MCF 10A (cell line): ENCODE measurements at regions of chr6 and their contacts with region 1.

Region 1: DNA sequence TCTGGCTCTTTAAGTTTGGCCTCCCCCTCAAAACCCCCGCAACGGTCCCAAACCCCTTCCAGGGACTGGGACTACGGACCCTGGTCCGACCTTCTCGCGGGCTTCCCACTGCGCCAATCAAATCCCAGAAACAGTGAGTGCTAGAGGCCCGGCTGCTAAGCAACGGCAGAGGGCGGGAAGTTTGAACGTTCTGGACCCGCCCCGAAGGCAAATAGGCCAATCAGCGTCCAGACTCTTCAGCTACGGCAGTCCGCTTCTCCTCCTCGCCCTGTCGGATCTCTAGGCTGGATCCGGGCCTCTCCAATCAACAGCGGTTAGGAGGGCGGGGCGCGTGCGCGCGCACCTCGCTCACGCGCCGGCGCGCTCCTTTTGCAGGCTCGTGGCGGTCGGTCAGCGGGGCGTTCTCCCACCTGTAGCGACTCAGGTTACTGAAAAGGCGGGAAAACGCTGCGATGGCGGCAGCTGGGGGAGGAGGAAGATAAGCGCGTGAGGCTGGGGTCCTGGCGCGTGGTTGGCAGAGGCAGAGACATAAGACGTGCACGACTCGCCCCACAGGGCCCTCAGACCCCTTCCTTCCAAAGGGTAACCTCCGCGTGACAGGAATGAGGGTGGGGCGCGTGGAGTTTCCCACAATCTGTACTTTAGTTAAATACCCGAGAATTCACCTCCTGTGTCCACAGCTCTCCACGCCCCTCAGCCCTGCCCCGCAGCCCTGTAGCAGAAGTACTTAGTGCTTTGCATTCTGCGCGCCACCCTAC is at the start of gene MSH5:
- DNase-seq: peak; percentile 99
- H3K4me3 Mint-ChIP-seq: peak within 1 kb of the TSS; percentile 88
- H3K27ac Mint-ChIP-seq: peak within 1 kb of the TSS; percentile 81
- H3K4me1 Mint-ChIP-seq: peaks cover 40% of the 10 kb centered on the region
- H3K27me3 Mint-ChIP-seq: no peaks in the 10 kb centered on the region
- CTCF ChIP-seq: no peak
- total RNA-seq, gene MSH5: 36.6 and 43.1 TPM in 2 replicates

Region 2: GRCh38 chr6:31702819-31703522 is 36.8 kb before region 1 on chr6 and contains the start of gene ABHD16A:
- CTCF ChIA-PET with region 1: no interaction called
- POLR2A ChIA-PET with region 1: interaction called, 29 read pairs
- intact Hi-C with region 1: loop called (anchors 2 kb)
- DNase-seq: peak; percentile 98
- H3K4me3 Mint-ChIP-seq: peak within 1 kb of the TSS; percentile 95
- H3K27ac Mint-ChIP-seq: peak within 1 kb of the TSS; percentile 89
- H3K4me1 Mint-ChIP-seq: peaks cover 5% of the 10 kb centered on the region
- H3K27me3 Mint-ChIP-seq: no peaks in the 10 kb centered on the region
- CTCF ChIP-seq: no peak
- total RNA-seq, gene ABHD16A: 32.1 and 42.7 TPM in 2 replicates

Region 3: GRCh38 chr6:31752739-31753319 is 13.0 kb after region 1 on chr6:
- CTCF ChIA-PET with region 1: interaction called, 4 read pairs
- POLR2A ChIA-PET with region 1: interaction called, 13 read pairs
- intact Hi-C with region 1: no loop called
- DNase-seq: peak; percentile 60
- H3K4me3 Mint-ChIP-seq: no peak overlapping the region
- H3K27ac Mint-ChIP-seq: no peak overlapping the region
- H3K4me1 Mint-ChIP-seq: peaks cover 10% of the 10 kb centered on the region
- H3K27me3 Mint-ChIP-seq: no peaks in the 10 kb centered on the region
- CTCF ChIP-seq: no peak

Region 4: DNA sequence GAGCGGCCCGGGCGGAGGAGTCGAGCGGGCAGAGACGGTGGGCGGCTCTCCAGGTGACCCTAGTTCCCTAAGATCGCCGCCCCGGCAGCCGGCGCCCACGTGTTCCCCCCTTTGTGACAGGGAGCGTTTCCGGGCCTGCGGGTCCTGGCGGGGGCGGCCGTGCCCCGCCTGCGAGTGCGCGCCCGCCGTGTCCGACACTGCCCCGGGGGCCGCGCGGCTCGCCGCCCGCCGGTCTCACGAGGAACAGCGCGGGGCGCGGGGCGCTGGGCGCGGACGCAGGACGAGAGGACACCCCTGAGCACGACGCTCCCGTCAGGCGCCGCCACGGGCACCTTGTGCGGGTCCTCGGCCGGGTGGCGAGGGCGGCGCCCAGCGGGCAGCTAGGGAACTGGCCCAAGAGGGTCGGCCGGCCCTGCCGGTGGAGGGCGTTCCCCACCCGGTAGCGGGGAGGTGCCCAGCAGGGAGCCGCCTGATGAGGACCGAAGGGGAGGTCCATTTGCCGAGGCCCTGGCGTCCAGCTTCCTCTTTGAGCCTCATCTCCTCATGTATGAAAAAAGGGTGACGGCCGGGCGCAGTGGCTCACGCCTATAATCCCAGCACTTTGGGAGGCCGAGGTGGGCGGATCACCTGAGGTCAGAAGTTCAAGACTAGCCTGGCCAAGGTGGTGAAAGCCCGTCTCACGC is 55.9 kb after region 1 on chr6 and contains the start of gene VARS1:
- CTCF ChIA-PET with region 1: interaction called, 5 read pairs
- POLR2A ChIA-PET with region 1: interaction called, 30 read pairs
- intact Hi-C with region 1: no loop called
- DNase-seq: peak; percentile 93
- H3K4me3 Mint-ChIP-seq: peak within 1 kb of the TSS; percentile 99
- H3K27ac Mint-ChIP-seq: peak within 1 kb of the TSS; percentile 98
- H3K4me1 Mint-ChIP-seq: peaks cover 27% of the 10 kb centered on the region
- H3K27me3 Mint-ChIP-seq: no peaks in the 10 kb centered on the region
- CTCF ChIP-seq: peak; percentile 69
- total RNA-seq, gene VARS1: 133 and 200 TPM in 2 replicates

Region 5: DNA sequence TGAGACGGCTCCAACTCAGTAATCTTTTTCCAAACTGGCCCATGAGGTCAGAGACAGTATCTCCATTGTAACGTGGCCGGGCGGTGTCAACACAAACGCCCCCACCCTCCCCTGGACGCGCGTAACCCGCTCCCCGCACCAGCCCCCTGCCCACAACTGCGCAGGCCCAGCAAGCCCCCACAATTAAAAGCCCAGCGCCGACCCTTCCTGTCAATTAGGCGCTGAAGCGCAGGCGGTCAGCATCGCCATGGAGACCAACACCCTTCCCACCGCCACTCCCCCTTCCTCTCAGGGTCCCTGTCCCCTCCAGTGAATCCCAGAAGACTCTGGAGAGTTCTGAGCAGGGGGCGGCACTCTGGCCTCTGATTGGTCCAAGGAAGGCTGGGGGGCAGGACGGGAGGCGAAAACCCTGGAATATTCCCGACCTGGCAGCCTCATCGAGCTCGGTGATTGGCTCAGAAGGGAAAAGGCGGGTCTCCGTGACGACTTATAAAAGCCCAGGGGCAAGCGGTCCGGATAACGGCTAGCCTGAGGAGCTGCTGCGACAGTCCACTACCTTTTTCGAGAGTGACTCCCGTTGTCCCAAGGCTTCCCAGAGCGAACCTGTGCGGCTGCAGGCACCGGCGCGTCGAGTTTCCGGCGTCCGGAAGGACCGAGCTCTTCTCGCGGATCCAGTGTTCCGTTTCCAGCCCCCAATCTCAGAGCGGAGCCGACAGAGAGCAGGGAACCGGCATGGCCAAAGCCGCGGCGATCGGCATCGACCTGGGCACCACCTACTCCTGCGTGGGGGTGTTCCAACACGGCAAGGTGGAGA is 75.4 kb after region 1 on chr6 and contains the starts of genes HSPA1A and HSPA1L:
- CTCF ChIA-PET with region 1: interaction called, 5 read pairs
- POLR2A ChIA-PET with region 1: interaction called, 52 read pairs
- intact Hi-C with region 1: no loop called
- DNase-seq: peak; percentile 99
- H3K4me3 Mint-ChIP-seq: peak within 1 kb of the TSS; percentile 89
- H3K27ac Mint-ChIP-seq: peak within 1 kb of the TSS; percentile 97
- H3K4me1 Mint-ChIP-seq: peaks cover 11% of the 10 kb centered on the region
- H3K27me3 Mint-ChIP-seq: no peaks in the 10 kb centered on the region
- CTCF ChIP-seq: no peak
- total RNA-seq, gene HSPA1A: 20.3 and 34.0 TPM in 2 replicates
- total RNA-seq, gene HSPA1L: 0.35 and 0.79 TPM in 2 replicates

Region 6: GRCh38 chr6:31827286-31828079 is 87.7 kb after region 1 on chr6 and contains the start of gene HSPA1B:
- CTCF ChIA-PET with region 1: interaction called, 3 read pairs
- POLR2A ChIA-PET with region 1: interaction called, 95 read pairs
- intact Hi-C with region 1: no loop called
- DNase-seq: peak; percentile 100
- H3K4me3 Mint-ChIP-seq: peak within 1 kb of the TSS; percentile 78
- H3K27ac Mint-ChIP-seq: peak within 1 kb of the TSS; percentile 99
- H3K4me1 Mint-ChIP-seq: peaks cover 13% of the 10 kb centered on the region
- H3K27me3 Mint-ChIP-seq: no peaks in the 10 kb centered on the region
- CTCF ChIP-seq: no peak
- total RNA-seq, gene HSPA1B: 29.8 and 51.6 TPM in 2 replicates

Region 7: GRCh38 chr6:31844507-31844906 is 104.7 kb after region 1 on chr6:
- CTCF ChIA-PET with region 1: no interaction called
- POLR2A ChIA-PET with region 1: no interaction called
- intact Hi-C with region 1: no loop called
- DNase-seq: no peak
- H3K4me3 Mint-ChIP-seq: no peak overlapping the region
- H3K27ac Mint-ChIP-seq: no peak overlapping the region
- H3K4me1 Mint-ChIP-seq: no peaks in the 10 kb centered on the region
- H3K27me3 Mint-ChIP-seq: no peaks in the 10 kb centered on the region
- CTCF ChIP-seq: no peak